HepG2 (cell line): ENCODE measurements at regions of chr7 and their contacts with region 1.

Region 1: DNA sequence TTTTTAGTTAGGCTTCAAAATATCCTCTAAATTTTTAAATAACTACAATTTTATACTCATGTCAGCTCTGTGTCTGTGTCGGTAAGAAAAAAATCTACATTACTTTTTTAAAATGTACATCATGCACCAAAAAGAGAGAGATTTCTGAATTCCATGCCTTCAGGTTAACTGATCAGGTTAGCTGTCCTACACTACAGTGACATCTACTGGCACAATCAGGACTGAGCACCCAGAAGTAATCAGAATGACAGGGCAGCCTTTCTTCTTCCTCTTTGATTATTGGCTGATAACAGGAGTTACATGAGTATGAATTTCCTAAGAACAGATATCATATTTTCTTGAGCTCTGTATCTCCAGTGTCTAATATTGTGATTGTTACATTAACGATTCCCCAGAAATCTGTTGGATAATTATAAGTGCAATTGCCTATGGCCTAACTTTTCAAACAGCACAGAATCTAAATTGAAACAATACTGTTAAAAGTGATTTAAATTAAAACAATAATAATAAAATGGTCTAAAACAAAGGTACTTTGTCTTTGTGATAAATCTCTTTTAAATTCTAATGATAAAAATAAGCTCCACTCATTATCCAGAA is 41.8 kb upstream of the HYCC1 start:
- DNase-seq: peak; percentile 52
- ATAC-seq: peak; percentile 86
- H3K4me3 ChIP-seq: no peak overlapping the region
- H3K27ac ChIP-seq: no peak overlapping the region
- H3K4me1 ChIP-seq: no peaks in the 10 kb centered on the region
- H3K27me3 ChIP-seq: no peaks in the 10 kb centered on the region
- CTCF ChIP-seq: peak; percentile 88
- EP300 ChIP-seq: no peak
- POLR2A ChIP-seq: no peak
- RAD21 ChIP-seq: peak; percentile 82

Region 2: DNA sequence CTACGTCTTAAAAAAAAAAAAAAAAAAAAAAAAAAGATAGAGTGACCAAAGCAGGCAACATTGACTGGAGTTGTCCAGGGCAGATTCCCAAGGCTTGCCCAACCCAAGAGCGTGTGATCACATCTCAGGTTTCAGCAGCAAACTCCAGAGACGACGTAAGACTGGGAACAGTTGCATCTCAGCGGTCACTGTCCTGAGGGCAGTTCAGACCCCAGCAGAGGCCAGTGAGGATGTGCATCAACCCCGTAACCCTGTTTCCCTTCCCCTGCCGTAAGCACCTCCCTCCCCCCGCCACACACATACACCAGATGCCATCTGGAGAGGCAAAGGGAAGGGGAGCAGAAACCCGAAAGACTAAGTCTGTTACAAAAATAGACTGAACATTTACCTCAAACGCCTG is 213.7 kb before region 1 on chr7:
- CTCF ChIA-PET with region 1: no interaction called
- POLR2A ChIA-PET with region 1: no interaction called
- in situ Hi-C with region 1: no loop called
- intact Hi-C with region 1: no loop called
- DNase-seq: no peak
- ATAC-seq: peak; percentile 28; the same call in 1 of the 3 replicates
- H3K4me3 ChIP-seq: no peak overlapping the region
- H3K27ac ChIP-seq: no peak overlapping the region
- H3K4me1 ChIP-seq: no peaks in the 10 kb centered on the region
- H3K27me3 ChIP-seq: peaks cover 1 to 13% of the 10 kb centered on the region in 2 experiments; a peak in 4 of 5 replicates
- CTCF ChIP-seq: no peak
- EP300 ChIP-seq: no peak
- POLR2A ChIP-seq: no peak
- RAD21 ChIP-seq: no peak

Region 3: GRCh38 chr7:23013715-23014649 is 41.7 kb before region 1 on chr7 and contains the start of gene HYCC1:
- CTCF ChIA-PET with region 1: interaction called, 4 read pairs
- POLR2A ChIA-PET with region 1: no interaction called
- in situ Hi-C with region 1: no loop called
- intact Hi-C with region 1: loop called (anchors 2 kb)
- DNase-seq: peak; percentile 96
- ATAC-seq: peak; percentile 98
- H3K4me3 ChIP-seq: peak within 1 kb of the TSS; percentile 88 to 91 (median 88)
- H3K27ac ChIP-seq: peak within 1 kb of the TSS; percentile 70
- H3K4me1 ChIP-seq: peaks cover 65% of the 10 kb centered on the region
- H3K27me3 ChIP-seq: no peaks in the 10 kb centered on the region
- CTCF ChIP-seq: peak; percentile 64
- EP300 ChIP-seq: no peak
- POLR2A ChIP-seq: peak; percentile 96 to 99
- RAD21 ChIP-seq: no peak
- total RNA-seq, gene HYCC1: 41.8 and 52.2 TPM in 2 replicates

Region 4: GRCh38 chr7:23157679-23158078 is 102.0 kb after region 1 on chr7:
- CTCF ChIA-PET with region 1: no interaction called
- POLR2A ChIA-PET with region 1: no interaction called
- in situ Hi-C with region 1: no loop called
- intact Hi-C with region 1: no loop called
- DNase-seq: no peak
- ATAC-seq: no peak
- H3K4me3 ChIP-seq: no peak overlapping the region
- H3K27ac ChIP-seq: no peak overlapping the region
- H3K4me1 ChIP-seq: no peaks in the 10 kb centered on the region
- H3K27me3 ChIP-seq: no peaks in the 10 kb centered on the region
- CTCF ChIP-seq: no peak
- EP300 ChIP-seq: no peak
- POLR2A ChIP-seq: no peak
- RAD21 ChIP-seq: no peak